Sigmoid colon (tissue), 7 donors: ENCODE measurements at regions of chr17 and their contacts with region 1.

Region 1: DNA sequence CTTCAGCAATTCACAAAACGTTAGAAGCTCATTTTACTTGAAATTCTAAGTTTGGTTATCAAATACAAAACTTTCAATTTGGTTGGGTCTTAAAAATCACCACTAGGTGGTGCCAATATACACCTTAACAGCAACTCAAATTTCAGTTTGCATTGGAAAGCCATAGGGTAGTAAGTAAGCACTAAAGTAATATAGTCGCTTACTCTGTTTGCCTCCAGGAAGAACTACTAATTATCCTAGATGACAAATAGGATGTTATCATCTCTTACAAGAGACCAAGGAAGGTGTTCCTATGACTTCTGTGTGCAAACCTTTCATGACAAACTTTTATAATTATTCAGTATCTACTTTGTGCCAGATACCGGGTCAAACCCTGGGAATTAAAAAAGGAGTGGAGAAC is 93.3 kb downstream of the MYO1D start:
- DNase-seq: no peak
- H3K4me3 ChIP-seq: no peak overlapping the region
- H3K27ac ChIP-seq: no peak overlapping the region
- H3K4me1 ChIP-seq: no peaks in the 10 kb centered on the region
- H3K27me3 ChIP-seq: no peaks in the 10 kb centered on the region
- CTCF ChIP-seq: peak; percentile 46 to 72 (median 58)
- EP300 ChIP-seq: no peak
- POLR2A ChIP-seq: no peak

Region 2: GRCh38 chr17:32723310-32723955 is 60.2 kb before region 1 on chr17:
- intact Hi-C with region 1: no loop called
- DNase-seq: no peak
- H3K4me3 ChIP-seq: no peak overlapping the region
- H3K27ac ChIP-seq: no peak overlapping the region
- H3K4me1 ChIP-seq: no peaks in the 10 kb centered on the region
- H3K27me3 ChIP-seq: no peaks in the 10 kb centered on the region
- CTCF ChIP-seq: no peak
- EP300 ChIP-seq: no peak
- POLR2A ChIP-seq: no peak

Region 3: GRCh38 chr17:32936894-32937500 is 153.4 kb after region 1 on chr17:
- intact Hi-C with region 1: loop called (anchors 5 kb)
- DNase-seq: peak; percentile 79
- H3K4me3 ChIP-seq: no peak overlapping the region
- H3K27ac ChIP-seq: peak overlapping the region in 1 of 4 donors; percentile 25
- H3K4me1 ChIP-seq: peaks cover 0 to 8% (median 3%) of the 10 kb centered on the region in 4 donors
- H3K27me3 ChIP-seq: no peaks in the 10 kb centered on the region
- CTCF ChIP-seq: peak; percentile 45 to 82 (median 76)
- EP300 ChIP-seq: no peak
- POLR2A ChIP-seq: no peak

Region 4: DNA sequence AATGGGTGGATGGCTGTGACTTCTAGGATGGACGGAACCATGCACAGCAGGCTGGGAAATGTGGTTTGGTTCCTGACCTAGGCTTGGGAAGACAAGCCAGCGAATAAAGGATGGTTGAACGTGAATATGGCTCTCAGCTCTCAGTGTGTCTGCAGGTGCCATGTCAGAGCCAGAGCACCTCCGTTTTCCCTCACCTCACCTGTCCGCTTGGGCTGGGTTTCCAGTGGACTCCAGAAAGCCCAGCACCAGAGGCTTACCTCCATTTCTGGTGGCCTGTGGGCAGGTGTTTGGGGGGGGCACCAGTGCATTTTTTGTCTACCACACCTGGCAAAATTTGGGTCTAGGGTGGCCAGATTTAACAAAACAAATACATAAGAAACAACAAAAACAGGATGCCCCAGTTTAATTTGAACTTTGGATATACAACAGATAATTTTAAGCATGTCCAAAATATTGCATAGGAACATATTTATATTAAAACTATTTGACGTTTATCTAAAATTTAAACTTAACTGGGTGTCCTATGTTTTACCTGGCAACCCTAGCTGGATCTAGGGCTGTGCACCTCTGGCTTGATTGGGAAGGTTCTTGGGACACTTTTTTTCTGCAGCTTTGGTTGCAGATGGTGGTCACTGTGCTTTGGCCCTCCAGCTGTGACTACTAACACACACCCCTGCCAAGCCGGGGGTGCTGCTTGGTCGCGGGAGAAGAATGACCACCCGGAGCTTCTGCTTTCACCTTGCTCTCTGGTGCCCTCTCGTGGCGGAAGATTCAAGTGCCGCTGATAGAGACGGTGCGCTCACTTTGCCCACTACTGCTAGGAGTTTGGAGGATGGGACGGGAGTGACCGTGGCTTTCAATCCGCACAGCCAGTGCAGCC is 214.4 kb after region 1 on chr17:
- intact Hi-C with region 1: loop called (anchors 2 kb)
- DNase-seq: peak; percentile 80
- H3K4me3 ChIP-seq: no peak overlapping the region
- H3K27ac ChIP-seq: no peak overlapping the region
- H3K4me1 ChIP-seq: peaks cover 0 to 7% (median 5%) of the 10 kb centered on the region in 4 donors
- H3K27me3 ChIP-seq: peaks cover 0 to 17% (median 4%) of the 10 kb centered on the region in 3 donors
- CTCF ChIP-seq: peak; percentile 48 to 87 (median 72)
- EP300 ChIP-seq: no peak
- POLR2A ChIP-seq: no peak